Calu3 (cell line): ENCODE measurements at regions of chr10 and their contacts with region 1.

Region 1: DNA sequence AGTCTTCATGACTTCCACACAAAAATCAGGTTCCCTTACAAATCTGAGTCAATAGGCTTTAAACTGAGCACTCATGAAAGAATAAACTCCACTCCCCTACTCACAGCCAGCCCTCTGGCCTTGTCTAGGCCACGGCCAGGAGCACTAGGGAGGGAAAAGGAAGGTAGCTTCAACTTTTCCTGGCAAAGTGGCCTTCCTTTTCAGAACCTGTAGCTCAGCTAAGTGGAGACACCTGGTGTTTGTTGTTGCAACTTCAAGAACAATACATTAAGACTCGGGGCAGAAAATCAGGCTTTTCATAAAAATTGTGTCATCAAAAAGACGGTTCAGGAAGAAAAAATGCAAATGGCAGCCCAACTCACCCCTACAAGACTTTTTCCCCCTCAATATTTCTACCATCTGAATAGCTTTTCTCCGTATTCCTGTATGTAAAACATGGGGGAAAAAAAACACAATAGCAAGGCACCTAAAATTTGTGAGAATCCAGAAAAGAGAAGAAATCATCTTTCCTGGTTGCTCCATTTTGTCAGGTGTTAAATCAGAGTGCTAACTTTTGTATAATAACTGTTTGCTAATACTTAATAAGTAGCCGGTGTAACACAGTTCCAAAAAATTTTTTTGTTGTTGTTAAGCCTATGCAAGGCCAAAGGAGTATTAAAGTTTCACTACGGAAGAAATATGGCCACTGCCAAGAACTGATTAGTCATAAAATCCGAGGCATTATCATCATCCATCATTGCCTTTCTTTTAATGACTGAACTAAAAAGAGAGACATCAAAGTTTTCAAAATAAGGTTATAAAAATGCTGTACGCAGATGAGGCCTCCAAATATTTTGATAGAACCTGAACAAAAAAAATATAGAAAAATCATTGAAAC is 66.2 kb upstream of the ARID5B start:
- DNase-seq: peak; percentile 58
- H3K4me3 Mint-ChIP-seq: no peak overlapping the region
- H3K27ac Mint-ChIP-seq: peak overlapping the region; percentile 28
- H3K4me1 Mint-ChIP-seq: peaks cover 51% of the 10 kb centered on the region
- H3K27me3 Mint-ChIP-seq: peaks cover 13% of the 10 kb centered on the region
- CTCF ChIP-seq: peak; percentile 61

Region 2: GRCh38 chr10:60816628-60817397 is 1018.5 kb before region 1 on chr10:
- CTCF ChIA-PET with region 1: interaction called, 4 read pairs
- intact Hi-C with region 1: loop called (anchors 5 kb)
- DNase-seq: peak; percentile 55
- H3K4me3 Mint-ChIP-seq: no peak overlapping the region
- H3K27ac Mint-ChIP-seq: no peak overlapping the region
- H3K4me1 Mint-ChIP-seq: no peaks in the 10 kb centered on the region
- H3K27me3 Mint-ChIP-seq: no peaks in the 10 kb centered on the region
- CTCF ChIP-seq: peak; percentile 83

Region 3: GRCh38 chr10:61606951-61607907 is 228.1 kb before region 1 on chr10:
- CTCF ChIA-PET with region 1: no interaction called
- intact Hi-C with region 1: loop called (anchors 10 kb)
- DNase-seq: no peak
- H3K4me3 Mint-ChIP-seq: no peak overlapping the region
- H3K27ac Mint-ChIP-seq: no peak overlapping the region
- H3K4me1 Mint-ChIP-seq: no peaks in the 10 kb centered on the region
- H3K27me3 Mint-ChIP-seq: no peaks in the 10 kb centered on the region
- CTCF ChIP-seq: peak; percentile 45

Region 4: DNA sequence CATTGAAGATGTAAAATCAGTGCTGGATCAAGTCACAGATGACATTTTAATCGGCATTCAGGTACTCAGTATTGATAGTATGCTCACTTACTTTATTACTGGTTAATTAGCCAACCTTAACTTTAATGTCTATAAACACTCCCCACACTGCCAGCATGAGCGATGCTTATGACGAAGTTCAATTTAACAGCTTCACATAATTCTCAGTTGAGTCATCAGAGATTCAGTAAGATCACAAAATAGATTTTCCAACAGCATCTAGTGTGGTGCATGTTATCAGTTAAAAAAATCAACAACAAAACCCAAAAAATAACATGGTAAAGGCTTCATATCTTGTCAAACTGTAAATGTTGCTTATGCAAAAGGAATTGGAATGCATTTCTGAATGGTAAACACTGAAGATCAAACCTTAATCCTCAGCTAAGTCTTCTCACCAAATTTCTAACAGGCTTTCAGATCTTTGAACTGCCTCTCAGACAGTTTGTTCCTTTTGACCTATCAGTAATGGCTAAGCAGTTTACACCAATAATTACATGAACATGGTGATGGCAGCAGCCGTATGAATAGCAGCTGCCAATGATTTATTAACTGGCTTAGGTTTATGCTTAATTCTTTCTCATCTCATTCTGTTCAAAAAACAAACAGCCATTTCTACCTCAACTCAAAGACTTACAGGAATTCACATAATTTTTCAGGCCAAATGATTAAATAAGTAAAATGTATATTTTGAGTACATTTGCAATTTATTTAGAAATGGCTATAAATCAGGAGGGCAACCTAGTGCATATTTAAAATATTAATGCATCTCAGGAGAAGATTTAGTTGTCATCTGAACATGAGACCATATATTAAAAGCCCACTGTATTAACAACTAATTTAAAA is 74.1 kb before region 1 on chr10:
- CTCF ChIA-PET with region 1: interaction called, 15 read pairs
- intact Hi-C with region 1: loop called (anchors 2 kb)
- DNase-seq: no peak
- H3K4me3 Mint-ChIP-seq: peak overlapping the region; percentile 57
- H3K27ac Mint-ChIP-seq: peak overlapping the region; percentile 95
- H3K4me1 Mint-ChIP-seq: peaks cover 56% of the 10 kb centered on the region
- H3K27me3 Mint-ChIP-seq: no peaks in the 10 kb centered on the region
- CTCF ChIP-seq: no peak

Region 5: DNA sequence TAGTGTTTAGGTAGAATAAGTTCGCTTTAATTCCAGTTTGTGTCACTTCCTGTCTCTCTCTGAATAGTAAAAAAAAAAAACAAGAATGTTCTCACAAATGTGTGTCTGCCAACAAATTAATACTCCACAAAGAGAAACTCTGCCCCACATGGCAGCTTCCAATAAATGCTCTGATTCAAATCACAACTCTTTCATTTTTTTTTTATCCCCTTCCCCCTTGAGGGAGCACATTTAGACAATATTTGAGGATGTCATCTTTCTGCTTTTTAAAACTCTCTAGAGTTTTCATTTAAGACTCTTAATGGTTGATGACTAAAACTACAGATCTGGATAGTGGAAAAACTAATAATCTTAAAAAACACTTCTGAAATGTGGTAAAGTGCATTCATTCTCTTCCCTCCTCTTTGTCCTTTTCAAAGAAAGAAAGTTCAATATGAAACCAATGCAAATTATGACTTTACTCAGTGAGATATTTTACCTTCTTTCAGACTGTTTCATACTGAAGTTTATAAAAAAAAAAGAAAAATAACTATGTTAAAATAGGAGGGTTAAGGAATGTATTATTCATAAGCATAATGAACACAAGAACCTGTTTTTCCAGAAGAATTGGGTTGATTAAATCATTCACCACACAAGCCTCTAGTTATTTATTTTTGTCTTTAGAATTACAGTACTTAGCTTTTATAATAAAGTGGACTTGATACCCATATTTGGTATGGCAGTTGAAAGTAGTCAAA is 108.5 kb after region 1 on chr10:
- CTCF ChIA-PET with region 1: interaction called, 3 read pairs
- intact Hi-C with region 1: loop called (anchors 2 kb)
- DNase-seq: peak; percentile 23
- H3K4me3 Mint-ChIP-seq: peak overlapping the region; percentile 50
- H3K27ac Mint-ChIP-seq: peak overlapping the region; percentile 94
- H3K4me1 Mint-ChIP-seq: peaks cover 51% of the 10 kb centered on the region
- H3K27me3 Mint-ChIP-seq: no peaks in the 10 kb centered on the region
- CTCF ChIP-seq: no peak

Region 6: DNA sequence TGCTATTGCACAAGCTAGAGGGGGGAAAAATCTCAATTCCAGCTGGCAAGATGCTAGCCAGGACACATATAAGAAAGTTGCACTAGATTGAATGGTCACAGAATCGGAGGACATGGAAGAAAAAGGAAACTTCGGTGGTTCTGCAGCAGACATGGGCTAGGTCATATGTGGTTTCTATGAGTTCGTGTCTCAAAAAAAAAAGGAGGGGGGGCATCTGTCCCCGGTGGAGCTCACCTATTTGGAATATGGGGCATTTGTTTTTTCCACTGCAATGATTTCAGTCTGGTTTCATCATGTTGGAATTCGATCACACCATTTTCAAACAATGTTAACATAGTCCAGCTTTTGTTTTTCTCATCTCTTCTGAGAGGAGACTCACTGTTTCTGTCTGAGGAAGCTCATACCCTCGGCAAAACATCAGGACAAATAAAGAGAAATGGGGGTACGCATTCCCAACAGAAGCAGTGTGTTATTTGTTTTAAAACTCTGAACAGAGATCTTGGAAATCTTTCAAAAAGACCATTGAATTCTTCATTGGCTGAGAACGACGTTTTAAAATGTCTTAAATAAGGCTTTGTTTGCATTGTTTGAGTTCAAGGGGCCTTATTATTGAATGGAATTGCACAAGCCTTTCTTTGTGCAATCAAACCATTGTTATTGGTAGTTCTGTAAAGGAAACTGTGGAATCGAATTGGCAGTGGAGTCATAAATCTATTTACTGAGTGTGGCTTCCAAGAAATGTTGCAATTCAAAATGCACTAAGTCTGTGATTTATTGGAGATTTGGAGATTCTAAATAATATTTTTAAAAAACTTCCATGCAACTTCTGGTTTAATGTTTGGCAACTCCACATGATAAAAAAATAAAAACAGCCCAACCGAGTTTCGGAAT is 260.1 kb after region 1 on chr10:
- CTCF ChIA-PET with region 1: no interaction called
- intact Hi-C with region 1: loop called (anchors 5 kb)
- DNase-seq: peak; percentile 54
- H3K4me3 Mint-ChIP-seq: peak overlapping the region; percentile 67
- H3K27ac Mint-ChIP-seq: peak overlapping the region; percentile 100
- H3K4me1 Mint-ChIP-seq: peaks cover 64% of the 10 kb centered on the region
- H3K27me3 Mint-ChIP-seq: no peaks in the 10 kb centered on the region
- CTCF ChIP-seq: no peak